ENCODE measurements at regions of chr5 and their contacts with region 1.

Region 1: GRCh38 chr5:111478266-111478665 is 34.1 kb downstream of the STARD4 start:
- H3K4me3 ChIP-seq: no peak overlapping the region
- H3K27ac ChIP-seq: no peak overlapping the region
- H3K4me1 ChIP-seq: no peaks in the 10 kb centered on the region
- CTCF ChIP-seq: no peak

Region 2: DNA sequence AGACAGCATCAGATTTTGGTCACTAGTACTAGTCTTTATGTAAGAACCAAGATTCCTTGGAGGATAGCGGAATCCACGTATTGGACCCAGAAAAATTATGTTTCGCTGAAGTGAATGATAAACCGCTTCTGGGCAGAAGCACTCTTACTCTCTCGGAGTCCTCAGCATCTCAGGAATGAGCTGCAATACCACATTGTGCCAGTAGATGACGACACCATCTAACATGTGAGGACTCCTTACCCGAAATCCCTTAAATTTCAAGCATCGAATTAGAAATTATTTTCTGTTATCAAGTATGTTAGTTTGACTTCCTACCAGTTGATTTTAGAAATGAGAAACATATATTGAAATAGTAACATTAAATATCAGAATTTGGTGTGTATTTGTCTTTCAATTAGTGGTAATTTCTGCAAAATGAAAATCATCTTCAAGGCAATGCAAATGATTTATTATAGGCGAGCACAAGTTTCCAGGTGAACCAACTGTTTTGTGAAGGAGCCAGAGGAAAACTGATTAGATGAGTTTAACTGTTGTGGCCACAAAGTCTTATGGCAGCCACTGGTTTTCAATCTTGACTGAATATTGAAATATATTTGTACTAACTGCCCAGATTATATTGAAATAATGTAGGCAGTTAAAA is 320.0 kb before region 1 on chr5:
- CTCF ChIA-PET with region 1: interaction called, 15 read pairs
- POLR2A ChIA-PET with region 1: no interaction called
- H3K4me3 ChIP-seq: no peak overlapping the region
- H3K27ac ChIP-seq: no peak overlapping the region
- H3K4me1 ChIP-seq: no peaks in the 10 kb centered on the region
- CTCF ChIP-seq: peak; percentile 80

Measured in HEK293 (cell line).